B cell (primary cell): ENCODE measurements at regions of chr7 and their contacts with region 1.

Region 1: GRCh38 chr7:77903597-77903996 is 105.0 kb downstream of the PHTF2 start:
- DNase-seq: peak; percentile 49
- ATAC-seq: no peak
- H3K4me3 ChIP-seq: no peak overlapping the region
- H3K4me3 Mint-ChIP-seq: no peak overlapping the region
- H3K27ac ChIP-seq: peak overlapping the region in 1 of 2 donors; percentile 77
- H3K27ac Mint-ChIP-seq: peak overlapping the region; percentile 66
- H3K4me1 ChIP-seq: peaks cover 17 to 34% of the 10 kb centered on the region in 2 donors
- H3K4me1 Mint-ChIP-seq: peaks cover 45% of the 10 kb centered on the region
- H3K27me3 ChIP-seq: no peaks in the 10 kb centered on the region
- H3K27me3 Mint-ChIP-seq: no peaks in the 10 kb centered on the region
- CTCF ChIP-seq: peak; percentile 25

Region 2: GRCh38 chr7:77536413-77537135 is 367.0 kb before region 1 on chr7:
- CTCF ChIA-PET with region 1: no interaction called
- POLR2A ChIA-PET with region 1: no interaction called
- intact Hi-C with region 1: loop called (anchors 10 kb)
- DNase-seq: peak; percentile 96
- ATAC-seq: peak; percentile 89
- H3K4me3 ChIP-seq: peak overlapping the region; percentile 88 to 96 (median 95)
- H3K4me3 Mint-ChIP-seq: peak overlapping the region; percentile 99
- H3K27ac ChIP-seq: peak overlapping the region; percentile 75 to 81
- H3K27ac Mint-ChIP-seq: peak overlapping the region; percentile 98
- H3K4me1 ChIP-seq: peaks cover 8 to 28% of the 10 kb centered on the region in 2 donors
- H3K4me1 Mint-ChIP-seq: peaks cover 27% of the 10 kb centered on the region
- H3K27me3 ChIP-seq: no peaks in the 10 kb centered on the region
- H3K27me3 Mint-ChIP-seq: no peaks in the 10 kb centered on the region
- CTCF ChIP-seq: no peak

Region 3: DNA sequence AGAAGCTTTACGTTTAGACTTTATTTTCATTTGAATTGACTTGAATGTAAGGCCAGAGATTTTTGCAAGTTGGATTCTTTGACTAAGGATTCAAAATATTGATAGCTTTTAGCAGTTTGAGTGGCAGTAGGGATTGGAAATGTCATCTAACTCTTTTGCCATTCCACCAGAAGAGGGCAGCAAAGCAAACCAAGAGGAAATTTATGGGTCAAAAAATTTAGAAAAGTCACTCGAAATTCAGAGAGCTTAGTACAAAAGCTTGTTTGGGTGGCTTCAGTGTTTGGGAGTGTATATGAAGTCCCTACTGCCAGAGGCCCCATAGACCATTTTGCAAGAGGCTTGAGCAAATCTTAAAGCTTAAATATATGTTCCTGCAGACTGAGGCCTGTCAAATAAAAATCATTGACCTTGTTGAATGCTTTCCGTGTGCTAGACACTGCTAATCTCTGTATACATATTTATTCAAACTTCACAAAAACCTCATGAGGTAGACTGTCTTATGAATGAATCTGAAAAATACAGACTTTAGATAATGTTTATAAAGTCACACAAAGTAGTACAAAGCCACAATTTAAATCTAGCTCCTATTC is 251.9 kb before region 1 on chr7:
- CTCF ChIA-PET with region 1: interaction called, 10 read pairs
- POLR2A ChIA-PET with region 1: no interaction called
- intact Hi-C with region 1: no loop called
- DNase-seq: peak; percentile 62
- ATAC-seq: no peak
- H3K4me3 ChIP-seq: no peak overlapping the region
- H3K4me3 Mint-ChIP-seq: no peak overlapping the region
- H3K27ac ChIP-seq: no peak overlapping the region
- H3K27ac Mint-ChIP-seq: no peak overlapping the region
- H3K4me1 ChIP-seq: no peaks in the 10 kb centered on the region
- H3K4me1 Mint-ChIP-seq: no peaks in the 10 kb centered on the region
- H3K27me3 ChIP-seq: no peaks in the 10 kb centered on the region
- H3K27me3 Mint-ChIP-seq: no peaks in the 10 kb centered on the region
- CTCF ChIP-seq: peak; percentile 89

Region 4: DNA sequence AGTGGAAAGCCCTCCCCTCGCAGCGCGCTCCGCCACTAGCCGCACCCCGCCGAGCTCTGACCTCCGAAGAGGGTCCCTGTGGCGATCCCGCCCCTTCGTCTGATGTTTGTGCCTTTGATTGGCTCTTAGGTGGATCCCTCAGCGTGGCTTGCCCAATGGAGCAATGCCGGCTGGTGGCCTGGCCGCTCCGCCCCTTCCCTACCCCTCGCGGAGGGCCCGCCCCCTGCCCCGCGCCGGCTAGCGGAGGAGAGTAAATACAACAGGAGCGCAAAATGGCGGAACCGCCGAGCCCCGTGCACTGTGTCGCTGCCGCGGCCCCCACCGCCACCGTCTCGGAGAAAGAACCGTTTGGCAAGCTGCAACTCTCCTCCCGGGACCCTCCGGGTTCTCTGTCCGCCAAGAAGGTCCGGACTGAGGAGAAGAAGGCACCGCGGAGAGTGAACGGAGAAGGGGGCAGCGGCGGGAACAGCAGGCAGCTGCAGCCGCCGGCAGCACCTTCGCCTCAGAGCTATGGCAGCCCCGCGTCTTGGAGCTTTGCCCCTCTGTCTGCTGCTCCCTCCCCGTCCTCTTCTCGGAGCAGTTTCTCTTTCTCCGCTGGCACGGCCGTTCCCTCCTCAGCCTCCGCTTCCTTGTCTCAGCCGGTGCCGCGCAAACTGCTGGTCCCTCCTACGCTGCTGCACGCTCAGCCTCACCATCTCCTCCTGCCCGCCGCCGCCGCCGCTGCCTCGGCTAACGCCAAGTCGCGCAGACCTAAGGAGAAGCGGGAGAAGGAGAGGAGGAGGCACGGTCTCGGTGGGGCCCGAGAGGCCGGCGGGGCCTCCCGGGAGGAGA is 207.2 kb before region 1 on chr7 and contains the start of gene RSBN1L:
- CTCF ChIA-PET with region 1: interaction called, 8 read pairs
- POLR2A ChIA-PET with region 1: no interaction called
- intact Hi-C with region 1: loop called (anchors 5 kb)
- DNase-seq: peak; percentile 97
- ATAC-seq: peak; percentile 94
- H3K4me3 ChIP-seq: peak within 1 kb of the TSS; percentile 72 to 100 (median 84)
- H3K4me3 Mint-ChIP-seq: peak within 1 kb of the TSS; percentile 98
- H3K27ac ChIP-seq: peak within 1 kb of the TSS; percentile 89 to 90
- H3K27ac Mint-ChIP-seq: peak within 1 kb of the TSS; percentile 97
- H3K4me1 ChIP-seq: peaks cover 20 to 35% of the 10 kb centered on the region in 2 donors
- H3K4me1 Mint-ChIP-seq: peaks cover 54% of the 10 kb centered on the region
- H3K27me3 ChIP-seq: no peaks in the 10 kb centered on the region
- H3K27me3 Mint-ChIP-seq: no peaks in the 10 kb centered on the region
- CTCF ChIP-seq: peak; percentile 61
- total RNA-seq, gene RSBN1L: 47.0 and 55.0 TPM in 2 replicates

Region 5: DNA sequence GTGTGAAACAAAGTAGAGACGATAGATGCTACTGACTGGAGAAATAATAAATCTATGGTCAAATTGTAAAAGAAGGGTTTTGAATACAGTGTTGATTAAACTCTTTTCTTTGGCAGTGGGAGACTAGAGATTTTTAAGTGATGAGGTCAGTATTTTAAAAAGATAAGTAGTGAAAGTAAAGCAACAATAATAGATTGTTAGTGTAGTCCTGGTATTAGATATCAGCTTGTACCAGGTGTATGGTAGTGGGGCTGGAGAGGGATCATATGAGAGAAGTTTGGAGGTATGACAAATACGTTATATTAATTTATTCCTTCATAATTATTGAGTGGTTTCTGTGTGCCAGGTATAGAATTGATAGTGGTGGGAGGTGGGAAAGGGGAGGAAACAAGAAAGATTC is 79.8 kb before region 1 on chr7:
- CTCF ChIA-PET with region 1: interaction called, 3 read pairs
- POLR2A ChIA-PET with region 1: no interaction called
- intact Hi-C with region 1: loop called (anchors 5 kb)
- DNase-seq: no peak
- ATAC-seq: peak; percentile 34
- H3K4me3 ChIP-seq: peak overlapping the region; percentile 9 to 71 (median 38)
- H3K4me3 Mint-ChIP-seq: peak overlapping the region; percentile 86
- H3K27ac ChIP-seq: peak overlapping the region; percentile 87 to 90
- H3K27ac Mint-ChIP-seq: peak overlapping the region; percentile 98
- H3K4me1 ChIP-seq: peaks cover 58 to 66% of the 10 kb centered on the region in 2 donors
- H3K4me1 Mint-ChIP-seq: peaks cover 70% of the 10 kb centered on the region
- H3K27me3 ChIP-seq: no peaks in the 10 kb centered on the region
- H3K27me3 Mint-ChIP-seq: no peaks in the 10 kb centered on the region
- CTCF ChIP-seq: no peak

Region 6: DNA sequence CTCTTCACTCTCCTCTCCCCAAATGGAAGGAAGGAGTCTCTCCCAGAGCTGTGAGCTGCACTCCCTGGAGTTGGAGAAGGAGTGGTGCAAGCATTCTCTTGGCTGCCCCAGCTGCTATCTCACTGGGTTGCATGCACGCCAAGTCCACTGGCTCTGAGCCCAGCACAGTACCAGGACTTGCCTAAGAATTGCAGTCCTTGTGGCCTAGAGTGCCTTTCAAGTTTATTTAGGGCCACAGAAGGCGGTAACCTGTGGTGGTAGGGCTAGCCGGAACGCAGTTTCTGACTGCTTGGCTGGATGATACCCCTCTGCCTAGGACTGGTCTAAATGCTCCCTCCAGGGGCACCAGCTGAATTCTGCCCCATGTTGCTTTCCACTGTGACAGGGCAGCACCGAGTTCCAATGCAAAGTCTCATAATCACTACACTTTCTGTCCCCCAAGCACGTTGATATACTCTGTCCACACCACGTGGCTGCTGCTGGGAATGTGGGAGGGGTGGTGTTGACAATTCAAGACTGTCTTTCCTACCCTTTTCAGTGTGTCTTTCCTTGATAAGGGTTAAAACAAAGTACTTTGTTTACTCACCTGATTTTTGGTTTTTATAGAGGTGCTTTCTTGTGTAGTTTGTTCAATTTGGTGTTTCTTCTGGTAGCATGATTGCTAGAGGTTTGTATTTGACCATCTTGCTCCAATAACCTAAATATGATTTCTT is 48.1 kb before region 1 on chr7:
- CTCF ChIA-PET with region 1: interaction called, 3 read pairs
- POLR2A ChIA-PET with region 1: interaction called, 3 read pairs
- intact Hi-C with region 1: loop called (anchors 5 kb)
- DNase-seq: no peak
- ATAC-seq: no peak
- H3K4me3 ChIP-seq: no peak overlapping the region
- H3K4me3 Mint-ChIP-seq: no peak overlapping the region
- H3K27ac ChIP-seq: peak overlapping the region in 1 of 2 donors; percentile 25
- H3K27ac Mint-ChIP-seq: peak overlapping the region; percentile 23
- H3K4me1 ChIP-seq: peaks cover 12 to 28% of the 10 kb centered on the region in 2 donors
- H3K4me1 Mint-ChIP-seq: peaks cover 60% of the 10 kb centered on the region
- H3K27me3 ChIP-seq: no peaks in the 10 kb centered on the region
- H3K27me3 Mint-ChIP-seq: no peaks in the 10 kb centered on the region
- CTCF ChIP-seq: no peak